PC-3 (cell line): ENCODE measurements at regions of chr3 and their contacts with region 1.

Region 1: GRCh38 chr3:146218880-146219866 is 31.7 kb downstream of the PLSCR4 start:
- DNase-seq: peak; percentile 70
- ATAC-seq: peak; percentile 15; the same call in 1 of the 2 replicates
- H3K4me3 ChIP-seq: no peak overlapping the region
- H3K27ac ChIP-seq: no peak overlapping the region
- H3K4me1 ChIP-seq: peaks cover 38% of the 10 kb centered on the region
- H3K27me3 ChIP-seq: no peaks in the 10 kb centered on the region
- CTCF ChIP-seq: peak; percentile 90

Region 2: DNA sequence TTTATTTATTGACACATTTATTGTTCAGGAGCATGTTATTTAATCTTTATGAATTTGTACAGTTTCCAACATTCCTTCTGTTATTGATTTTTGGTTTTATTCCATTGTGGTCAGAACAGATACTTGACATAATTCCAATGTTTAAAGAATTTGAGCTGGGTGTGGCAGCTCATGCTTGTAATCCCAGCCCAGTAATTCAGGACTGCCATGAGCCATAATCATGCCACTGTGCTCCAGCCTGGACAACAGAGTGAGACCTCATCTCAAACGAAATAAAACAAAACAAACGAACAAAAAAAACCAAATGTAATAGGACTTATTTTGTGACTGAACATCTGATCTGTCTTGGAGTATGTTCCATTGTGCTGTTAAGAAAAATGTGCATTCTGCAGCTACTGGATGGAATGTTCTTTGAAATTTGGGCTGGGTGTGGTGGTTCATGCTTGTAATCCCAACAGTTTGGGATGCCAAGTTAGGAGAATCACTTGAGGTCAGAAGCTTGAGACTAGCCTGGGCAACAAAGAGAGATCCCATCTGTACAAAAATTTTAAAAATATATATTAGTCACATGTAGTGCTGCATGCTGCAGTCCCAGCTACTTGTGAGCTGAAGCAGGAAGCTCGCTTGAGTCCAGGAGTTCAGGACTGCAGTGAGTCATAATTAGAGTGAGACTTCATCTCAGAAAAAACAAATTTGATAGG is 94.4 kb after region 1 on chr3:
- CTCF ChIA-PET with region 1: no interaction called
- POLR2A ChIA-PET with region 1: no interaction called
- intact Hi-C with region 1: loop called (anchors 1 kb)
- DNase-seq: peak; percentile 88
- ATAC-seq: peak; percentile 91
- H3K4me3 ChIP-seq: 0 out of 2 replicates have a peak overlapping the region, but pooled peaks have one; percentile 22
- H3K27ac ChIP-seq: peak overlapping the region; percentile 90
- H3K4me1 ChIP-seq: peaks cover 34% of the 10 kb centered on the region
- H3K27me3 ChIP-seq: no peaks in the 10 kb centered on the region
- CTCF ChIP-seq: no peak

Region 3: GRCh38 chr3:146326670-146327543 is 107.7 kb after region 1 on chr3:
- CTCF ChIA-PET with region 1: interaction called, 6 read pairs
- POLR2A ChIA-PET with region 1: no interaction called
- intact Hi-C with region 1: loop called (anchors 1 kb)
- DNase-seq: peak; percentile 84
- ATAC-seq: peak; percentile 96
- H3K4me3 ChIP-seq: no peak overlapping the region
- H3K27ac ChIP-seq: no peak overlapping the region
- H3K4me1 ChIP-seq: no peaks in the 10 kb centered on the region
- H3K27me3 ChIP-seq: no peaks in the 10 kb centered on the region
- CTCF ChIP-seq: peak; percentile 91

Region 4: GRCh38 chr3:146382386-146382785 is 163.2 kb after region 1 on chr3:
- CTCF ChIA-PET with region 1: no interaction called
- POLR2A ChIA-PET with region 1: no interaction called
- intact Hi-C with region 1: loop called (anchors 2 kb)
- DNase-seq: peak; percentile 61
- ATAC-seq: peak; percentile 93
- H3K4me3 ChIP-seq: no peak overlapping the region
- H3K27ac ChIP-seq: no peak overlapping the region
- H3K4me1 ChIP-seq: no peaks in the 10 kb centered on the region
- H3K27me3 ChIP-seq: no peaks in the 10 kb centered on the region
- CTCF ChIP-seq: peak; percentile 58